Adrenal gland (tissue), 19 donors: ENCODE measurements at regions of chrX and their contacts with region 1.

Region 1: DNA sequence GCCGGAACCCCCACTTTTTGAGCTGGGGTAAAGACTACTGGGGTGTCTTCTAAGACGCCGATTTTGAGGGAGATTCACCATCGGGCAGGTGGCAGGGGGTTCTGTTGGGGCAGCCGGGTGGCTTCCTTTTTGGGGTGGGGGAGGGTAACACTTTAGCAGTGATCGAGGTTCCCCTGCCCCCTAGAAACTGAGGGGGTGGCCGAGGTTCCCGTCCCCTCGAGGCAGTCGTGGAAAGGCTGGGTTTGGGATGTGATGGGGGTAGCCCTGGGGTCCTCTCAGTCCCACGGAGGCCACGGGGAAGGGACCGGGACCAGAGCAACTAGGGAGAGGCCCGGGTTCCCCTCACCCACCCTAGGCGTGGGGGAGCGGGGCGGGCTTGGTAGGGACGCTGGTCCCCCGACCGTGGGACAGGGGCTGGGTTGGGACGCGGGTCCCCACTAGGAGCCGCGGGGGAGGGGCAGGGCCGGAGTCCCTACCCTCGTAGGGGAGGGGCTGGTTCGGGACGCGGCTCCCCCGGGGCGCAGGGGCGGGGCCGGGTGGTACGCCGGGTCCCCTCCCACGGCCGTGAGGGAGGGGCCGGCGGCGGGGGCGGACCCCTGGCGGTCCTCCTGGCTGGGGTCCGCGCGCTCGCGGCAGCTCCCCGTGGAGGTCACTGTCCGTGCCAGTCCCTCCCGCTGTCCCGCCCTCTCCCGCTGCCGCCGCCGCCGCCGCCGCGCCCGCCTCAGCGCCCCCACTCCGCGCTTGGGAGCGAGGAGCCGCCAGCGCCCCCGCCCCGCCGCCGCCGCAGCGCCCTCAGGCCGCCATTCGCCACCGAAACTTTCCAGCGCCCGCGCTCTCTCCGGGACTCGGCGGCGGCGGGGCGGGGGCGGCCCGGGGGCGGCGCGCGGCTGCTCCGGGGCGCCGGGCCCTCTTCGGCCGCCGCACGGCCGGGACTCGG is at the start of gene TBL1X:
- DNase-seq: peak; percentile 26 to 64 (median 54)
- H3K4me3 ChIP-seq: peak within 1 kb of the TSS in 2 of 4 donors; percentile 43 to 70
- H3K27ac ChIP-seq: peak within 1 kb of the TSS; percentile 21 to 87 (median 61)
- H3K4me1 ChIP-seq: peaks cover 0 to 15% of the 10 kb centered on the region in 2 donors
- H3K27me3 ChIP-seq: no peaks in the 10 kb centered on the region
- CTCF ChIP-seq: no peak
- POLR2A ChIP-seq: peak in 1 of 2 donors; percentile 28
- total RNA-seq, gene TBL1X: 9.6 to 256 (median 34.2) TPM

Region 2: GRCh38 chrX:9341291-9342201 is 123.2 kb before region 1 on chrX:
- intact Hi-C with region 1: loop called (anchors 5 to 10 kb)
- DNase-seq: peak; percentile 69 to 81 (median 76)
- H3K4me3 ChIP-seq: peak overlapping the region in 1 of 4 donors; percentile 45
- H3K27ac ChIP-seq: peak overlapping the region in 4 of 5 donors; percentile 55 to 74 (median 72)
- H3K4me1 ChIP-seq: peaks cover 4 to 20% of the 10 kb centered on the region in 2 donors
- H3K27me3 ChIP-seq: no peaks in the 10 kb centered on the region
- CTCF ChIP-seq: no peak
- POLR2A ChIP-seq: no peak

Region 3: GRCh38 chrX:9710332-9710731 is 245.6 kb after region 1 on chrX:
- intact Hi-C with region 1: loop called in 1 of 2 experiments (anchors 10 kb)
- DNase-seq: no peak
- H3K4me3 ChIP-seq: no peak overlapping the region
- H3K27ac ChIP-seq: no peak overlapping the region
- H3K4me1 ChIP-seq: no peaks in the 10 kb centered on the region
- H3K27me3 ChIP-seq: no peaks in the 10 kb centered on the region
- CTCF ChIP-seq: no peak
- POLR2A ChIP-seq: no peak